ENCODE measurements at regions of chr7 and their contacts with region 1.

Region 1: GRCh38 chr7:149873074-149873969 is at the start of gene ATP6V0E2:
- DNase-seq: peak; percentile 88 to 91 (median 90)
- H3K4me3 ChIP-seq: peak within 1 kb of the TSS; percentile 61 to 82
- H3K4me3 Mint-ChIP-seq: peak within 1 kb of the TSS; percentile 85 to 93 (median 90)
- H3K27ac ChIP-seq: peak within 1 kb of the TSS; percentile 78
- H3K27ac Mint-ChIP-seq: peak within 1 kb of the TSS; percentile 89 to 93 (median 92)
- H3K4me1 ChIP-seq: peaks cover 83% of the 10 kb centered on the region
- H3K4me1 Mint-ChIP-seq: peaks cover 63 to 76% (median 66%) of the 10 kb centered on the region in 4 donors
- H3K27me3 ChIP-seq: no peaks in the 10 kb centered on the region
- H3K27me3 Mint-ChIP-seq: no peaks in the 10 kb centered on the region
- total RNA-seq, gene ATP6V0E2: 64.6 to 65.3 TPM

Region 2: GRCh38 chr7:149714050-149714909 is 159.0 kb before region 1 on chr7:
- CTCF ChIA-PET with region 1: no interaction called
- POLR2A ChIA-PET with region 1: no interaction called
- intact Hi-C with region 1: loop called (anchors 1 kb)
- DNase-seq: peak; percentile 80 to 90 (median 82)
- H3K4me3 ChIP-seq: peak overlapping the region; percentile 60 to 72
- H3K4me3 Mint-ChIP-seq: peak overlapping the region; percentile 76 to 87 (median 83)
- H3K27ac ChIP-seq: peak overlapping the region; percentile 62
- H3K27ac Mint-ChIP-seq: peak overlapping the region in 5 of 7 donors; percentile 35 to 85 (median 64)
- H3K4me1 ChIP-seq: peaks cover 23% of the 10 kb centered on the region
- H3K4me1 Mint-ChIP-seq: peaks cover 16 to 31% (median 18%) of the 10 kb centered on the region in 4 donors
- H3K27me3 ChIP-seq: no peaks in the 10 kb centered on the region
- H3K27me3 Mint-ChIP-seq: no peaks in the 10 kb centered on the region

Region 3: DNA sequence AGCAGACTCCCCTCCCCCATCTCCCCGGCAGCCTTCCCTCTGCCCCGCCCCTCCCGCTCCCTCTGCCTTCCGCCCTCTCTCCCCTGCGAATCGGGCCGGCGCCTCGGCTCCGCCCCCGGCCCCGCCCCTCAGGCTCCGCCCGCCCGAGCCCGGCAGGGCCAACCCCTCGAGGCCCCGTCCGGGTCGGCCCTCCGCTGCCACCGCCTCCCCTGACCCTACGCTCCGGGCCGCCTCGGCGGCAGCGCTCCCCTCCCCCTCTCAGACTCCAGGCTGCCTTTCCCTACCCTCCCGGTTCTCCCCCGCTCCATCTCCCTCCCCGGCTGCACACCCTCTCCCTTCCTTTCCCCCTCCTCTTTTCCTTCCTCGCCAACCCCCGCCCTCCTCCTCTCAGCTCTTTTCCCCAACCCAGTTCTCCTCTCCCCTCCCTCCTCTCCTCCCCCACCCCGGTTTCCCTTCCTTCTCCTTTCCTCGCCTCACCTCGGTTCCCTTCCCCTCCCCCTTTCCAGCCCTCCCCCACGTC is 101.5 kb before region 1 on chr7:
- CTCF ChIA-PET with region 1: no interaction called
- POLR2A ChIA-PET with region 1: interaction called, 3 read pairs
- intact Hi-C with region 1: loop called (anchors 2 kb)
- DNase-seq: peak; percentile 83 to 85 (median 84)
- H3K4me3 ChIP-seq: peak overlapping the region; percentile 52 to 60
- H3K4me3 Mint-ChIP-seq: peak overlapping the region; percentile 72 to 84 (median 77)
- H3K27ac ChIP-seq: peak overlapping the region; percentile 35
- H3K27ac Mint-ChIP-seq: peak overlapping the region in 2 of 7 donors; percentile 42 to 56
- H3K4me1 ChIP-seq: peaks cover 15% of the 10 kb centered on the region
- H3K4me1 Mint-ChIP-seq: peaks cover 3 to 17% (median 6%) of the 10 kb centered on the region in 4 donors
- H3K27me3 ChIP-seq: no peaks in the 10 kb centered on the region
- H3K27me3 Mint-ChIP-seq: peaks cover 0 to 3% of the 10 kb centered on the region in 2 donors

Region 4: GRCh38 chr7:149854611-149855360 is 18.5 kb before region 1 on chr7:
- CTCF ChIA-PET with region 1: interaction called, 4 read pairs
- POLR2A ChIA-PET with region 1: interaction called, 49 read pairs
- intact Hi-C with region 1: loop called (anchors 2 kb)
- DNase-seq: peak in 3 of 5 donors; percentile 41 to 49 (median 43)
- H3K4me3 ChIP-seq: no peak overlapping the region
- H3K4me3 Mint-ChIP-seq: peak overlapping the region in 6 of 8 donors; percentile 4 to 62 (median 32)
- H3K27ac ChIP-seq: peak overlapping the region; percentile 7
- H3K27ac Mint-ChIP-seq: peak overlapping the region; percentile 54 to 89 (median 83)
- H3K4me1 ChIP-seq: peaks cover 38% of the 10 kb centered on the region
- H3K4me1 Mint-ChIP-seq: peaks cover 36 to 50% (median 37%) of the 10 kb centered on the region in 4 donors
- H3K27me3 ChIP-seq: no peaks in the 10 kb centered on the region
- H3K27me3 Mint-ChIP-seq: no peaks in the 10 kb centered on the region

Region 5: GRCh38 chr7:149861446-149862045 is 11.8 kb before region 1 on chr7:
- CTCF ChIA-PET with region 1: interaction called, 12 read pairs
- POLR2A ChIA-PET with region 1: interaction called, 80 read pairs
- intact Hi-C with region 1: loop called (anchors 1 kb)
- DNase-seq: no peak
- H3K4me3 ChIP-seq: no peak overlapping the region
- H3K4me3 Mint-ChIP-seq: no peak overlapping the region
- H3K27ac ChIP-seq: no peak overlapping the region
- H3K27ac Mint-ChIP-seq: peak overlapping the region in 1 of 7 donors; percentile 63
- H3K4me1 ChIP-seq: peaks cover 64% of the 10 kb centered on the region
- H3K4me1 Mint-ChIP-seq: peaks cover 32 to 62% (median 48%) of the 10 kb centered on the region in 4 donors
- H3K27me3 ChIP-seq: no peaks in the 10 kb centered on the region
- H3K27me3 Mint-ChIP-seq: no peaks in the 10 kb centered on the region

Region 6: GRCh38 chr7:149883452-149883861 is 10.1 kb after region 1 on chr7:
- CTCF ChIA-PET with region 1: interaction called, 32 read pairs
- POLR2A ChIA-PET with region 1: interaction called, 80 read pairs
- intact Hi-C with region 1: no loop called
- DNase-seq: peak in 4 of 5 donors; percentile 41 to 53 (median 47)
- H3K4me3 ChIP-seq: no peak overlapping the region
- H3K4me3 Mint-ChIP-seq: peak overlapping the region in 1 of 8 donors; percentile 39
- H3K27ac ChIP-seq: no peak overlapping the region
- H3K27ac Mint-ChIP-seq: peak overlapping the region in 2 of 7 donors; percentile 64 to 65
- H3K4me1 ChIP-seq: peaks cover 13% of the 10 kb centered on the region
- H3K4me1 Mint-ChIP-seq: peaks cover 6 to 24% (median 15%) of the 10 kb centered on the region in 4 donors
- H3K27me3 ChIP-seq: no peaks in the 10 kb centered on the region
- H3K27me3 Mint-ChIP-seq: no peaks in the 10 kb centered on the region

Region 7: DNA sequence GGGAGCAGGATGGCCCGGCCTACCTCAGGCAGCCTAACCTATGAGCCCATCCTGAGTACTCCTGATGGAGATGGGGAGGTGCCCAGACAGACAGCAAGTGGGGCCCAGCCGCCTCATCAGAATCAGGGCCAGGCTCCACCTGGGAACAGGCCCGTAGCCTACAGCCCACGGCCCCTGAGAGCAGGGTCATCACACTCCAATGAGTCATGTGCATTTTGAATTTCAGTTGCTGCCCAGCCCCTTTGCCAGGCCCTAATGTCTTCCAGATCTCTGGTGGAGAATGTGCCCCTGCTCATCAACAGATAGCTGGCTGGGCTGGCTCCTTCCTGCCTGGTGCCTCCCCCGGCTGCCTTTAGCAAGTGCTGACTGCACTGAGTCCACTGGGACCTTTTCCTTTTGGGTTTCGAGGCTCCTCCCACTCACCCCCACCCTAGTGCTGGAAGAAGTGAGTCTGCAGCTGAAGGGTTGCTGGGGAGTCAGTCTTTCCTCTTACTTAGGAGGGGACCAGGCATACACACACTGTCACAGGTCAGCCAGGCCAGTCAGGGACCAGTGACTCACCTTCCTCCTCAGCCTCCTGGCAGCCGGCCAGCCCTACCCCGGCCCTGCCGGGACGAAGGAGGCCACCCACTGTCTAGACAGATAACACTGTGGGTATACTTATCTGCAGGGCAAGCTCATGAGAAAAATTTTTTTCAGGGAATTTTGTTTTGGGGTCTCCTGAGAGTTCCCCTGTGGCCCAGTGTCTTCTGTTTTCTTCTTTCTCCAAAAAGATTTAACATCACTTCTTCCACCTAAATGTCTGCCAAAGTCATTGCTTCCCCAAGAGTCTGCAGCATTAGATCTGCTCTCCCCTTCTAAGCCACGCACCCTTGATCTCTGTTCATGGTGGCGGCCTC is 1165.9 kb after region 1 on chr7:
- CTCF ChIA-PET with region 1: no interaction called
- POLR2A ChIA-PET with region 1: no interaction called
- intact Hi-C with region 1: no loop called
- DNase-seq: peak in 1 of 5 donors; percentile 63
- H3K4me3 ChIP-seq: no peak overlapping the region
- H3K4me3 Mint-ChIP-seq: no peak overlapping the region
- H3K27ac ChIP-seq: no peak overlapping the region
- H3K27ac Mint-ChIP-seq: peak overlapping the region in 4 of 7 donors; percentile 52 to 72 (median 60)
- H3K4me1 ChIP-seq: peaks cover 13% of the 10 kb centered on the region
- H3K4me1 Mint-ChIP-seq: peaks cover 0 to 13% (median 11%) of the 10 kb centered on the region in 4 donors
- H3K27me3 ChIP-seq: no peaks in the 10 kb centered on the region
- H3K27me3 Mint-ChIP-seq: no peaks in the 10 kb centered on the region